ENCODE measurements at regions of chr17 and their contacts with region 1.

Region 1: DNA sequence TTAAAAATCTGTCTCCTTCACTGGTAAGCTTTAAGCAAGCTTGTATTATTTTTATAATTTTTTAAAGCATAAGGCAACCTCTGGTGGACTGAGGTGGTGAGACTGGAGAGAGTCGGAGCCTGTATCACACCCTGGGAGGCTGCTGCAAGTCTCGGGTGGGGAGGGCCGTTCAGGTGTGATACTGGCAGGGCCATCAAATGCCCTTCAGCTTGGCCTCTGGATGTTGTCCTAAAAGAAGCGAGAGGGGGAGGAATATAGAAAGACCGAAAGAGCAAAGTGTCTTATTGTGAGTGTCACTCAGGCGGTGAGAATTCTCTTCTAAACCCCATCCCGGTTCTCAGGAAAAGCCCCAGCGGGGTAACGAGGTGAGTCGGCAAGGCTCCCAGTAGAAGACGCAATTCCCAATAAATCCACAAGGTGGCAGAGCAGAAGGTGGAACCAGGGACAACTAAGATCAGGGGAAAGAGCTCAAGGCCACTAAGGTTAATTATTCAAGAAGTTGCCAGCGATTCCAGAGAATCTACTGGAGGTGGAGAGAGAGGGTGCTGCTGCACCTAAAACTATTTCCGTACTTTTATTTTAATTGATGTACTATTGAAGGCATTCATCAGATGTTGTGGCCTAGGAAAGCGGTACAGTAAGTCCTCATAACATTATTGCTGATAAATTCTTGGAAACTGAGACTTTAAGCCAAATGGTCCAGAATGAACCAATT is 14.1 kb downstream of the C17orf67 start:
- DNase-seq: peak; percentile 83
- CTCF ChIP-seq: peak; percentile 75

Region 2: DNA sequence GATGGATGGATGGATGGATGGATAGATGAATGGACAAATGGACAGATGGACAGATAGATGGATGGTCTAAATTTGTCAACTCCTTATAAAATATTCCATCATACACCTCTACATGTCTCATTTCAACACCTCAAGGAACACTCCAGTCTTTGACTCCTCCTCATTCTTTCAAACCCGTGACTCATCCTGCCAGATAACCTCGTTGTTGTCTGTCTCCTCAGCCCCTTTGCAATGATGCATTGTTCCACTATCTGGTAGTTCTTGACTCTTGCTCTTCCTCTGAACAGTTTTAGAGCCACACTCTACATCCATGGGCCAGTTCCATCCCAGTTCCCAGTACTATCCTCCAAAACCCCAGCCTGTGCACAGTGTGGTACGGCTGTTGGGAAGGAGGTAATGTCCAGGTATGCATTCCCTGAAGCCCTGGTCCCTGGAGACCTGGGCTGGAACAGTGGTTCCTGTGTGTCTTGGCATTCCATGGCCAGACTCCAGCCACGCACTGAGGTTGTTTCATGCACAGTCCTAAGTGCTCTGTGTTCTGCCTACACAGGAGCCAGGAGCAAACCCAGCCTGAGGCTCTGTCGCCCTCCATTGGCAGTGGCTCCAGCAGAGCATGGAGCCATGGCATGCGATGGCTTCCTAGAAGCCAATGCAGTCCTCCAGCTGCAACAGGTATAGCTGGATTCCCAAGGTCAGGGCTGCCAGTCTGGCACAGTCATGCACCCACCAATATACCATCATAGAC is 91.5 kb before region 1 on chr17:
- CTCF ChIA-PET with region 1: no interaction called
- POLR2A ChIA-PET with region 1: no interaction called
- DNase-seq: no peak
- CTCF ChIP-seq: no peak

Region 3: GRCh38 chr17:56779898-56780733 is 39.5 kb before region 1 on chr17:
- CTCF ChIA-PET with region 1: interaction called, 14 read pairs
- POLR2A ChIA-PET with region 1: no interaction called
- DNase-seq: peak; percentile 88
- CTCF ChIP-seq: peak; percentile 97

Region 4: GRCh38 chr17:56891784-56892183 is 72.2 kb after region 1 on chr17:
- CTCF ChIA-PET with region 1: interaction called, 13 read pairs
- POLR2A ChIA-PET with region 1: no interaction called
- DNase-seq: no peak
- CTCF ChIP-seq: no peak

Region 5: DNA sequence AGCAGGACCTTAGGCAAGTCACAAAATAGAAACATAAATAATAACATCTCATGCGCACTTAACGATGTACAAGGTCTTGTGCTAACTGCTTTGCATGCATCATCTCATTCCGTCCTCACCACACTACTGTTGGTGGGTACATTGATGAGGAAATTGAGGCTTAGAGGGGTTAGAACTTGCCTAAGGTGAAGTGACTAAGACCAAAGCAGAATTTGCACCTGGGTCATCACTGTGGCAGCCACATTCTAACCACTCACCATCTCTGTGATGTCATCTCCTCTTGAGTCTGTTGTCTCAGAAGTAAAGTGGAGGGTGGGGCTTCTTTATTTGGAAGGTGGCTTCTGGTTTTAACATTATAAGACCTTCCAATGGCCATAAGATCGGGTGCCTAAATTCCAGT is 114.7 kb after region 1 on chr17:
- CTCF ChIA-PET with region 1: interaction called, 144 read pairs
- POLR2A ChIA-PET with region 1: no interaction called
- DNase-seq: no peak
- CTCF ChIP-seq: no peak

Region 6: DNA sequence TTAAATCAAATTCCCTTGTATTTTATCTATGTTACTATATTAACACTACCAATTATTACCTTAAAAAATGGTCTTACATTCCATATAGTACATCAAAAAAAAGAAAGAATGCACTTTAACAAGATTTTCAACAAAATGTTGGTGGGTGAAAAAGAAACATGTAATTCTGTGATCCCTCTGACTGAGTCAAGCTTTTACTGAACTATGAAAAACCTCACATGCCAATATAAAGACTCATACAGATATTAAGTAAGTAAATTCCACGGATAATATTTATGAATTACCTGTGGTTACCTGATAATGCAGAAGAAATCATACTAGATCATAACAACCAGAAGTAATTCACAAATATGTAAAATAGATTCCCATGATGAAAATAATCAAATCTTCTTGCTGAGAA is 128.9 kb after region 1 on chr17:
- CTCF ChIA-PET with region 1: interaction called, 144 read pairs
- POLR2A ChIA-PET with region 1: no interaction called
- DNase-seq: no peak
- CTCF ChIP-seq: no peak

Region 7: DNA sequence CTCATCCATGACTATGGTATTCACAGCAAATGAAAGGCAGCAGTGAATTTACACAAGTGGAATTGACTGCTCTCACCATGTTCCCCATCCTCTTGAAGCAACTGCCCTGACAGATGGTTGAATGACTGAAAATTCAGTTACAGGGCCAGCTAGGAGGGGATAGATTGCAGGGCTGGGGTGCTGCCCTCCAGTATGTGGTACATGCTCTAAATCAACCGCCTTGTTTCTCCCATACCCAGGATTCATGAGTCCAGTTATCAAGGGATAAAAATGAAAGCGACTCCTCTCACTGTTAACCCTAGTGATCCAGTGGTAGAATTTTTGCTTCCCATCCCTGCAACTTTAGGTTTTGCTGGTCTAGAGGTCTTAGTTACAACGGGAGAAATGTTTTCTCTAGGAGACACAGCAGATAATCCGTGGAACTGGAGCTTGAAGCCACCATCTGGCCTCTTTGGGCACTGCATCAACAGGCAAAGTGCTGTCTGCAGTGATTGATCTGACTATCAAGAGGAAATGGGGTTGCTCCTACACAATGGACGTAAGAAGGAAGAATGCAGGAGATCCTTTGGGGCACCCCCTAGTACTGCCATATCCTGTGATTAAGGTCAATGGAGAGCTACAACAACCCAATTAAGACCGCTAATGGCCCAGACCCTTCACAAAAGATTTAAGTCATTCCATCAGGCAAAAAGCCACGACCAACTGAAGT is 190.3 kb after region 1 on chr17:
- CTCF ChIA-PET with region 1: interaction called, 19 read pairs
- POLR2A ChIA-PET with region 1: no interaction called
- DNase-seq: peak; percentile 74
- CTCF ChIP-seq: peak; percentile 84

Measured in GM10248 (cell line).